A673 (cell line): ENCODE measurements at regions of chr2 and their contacts with region 1.

Region 1: DNA sequence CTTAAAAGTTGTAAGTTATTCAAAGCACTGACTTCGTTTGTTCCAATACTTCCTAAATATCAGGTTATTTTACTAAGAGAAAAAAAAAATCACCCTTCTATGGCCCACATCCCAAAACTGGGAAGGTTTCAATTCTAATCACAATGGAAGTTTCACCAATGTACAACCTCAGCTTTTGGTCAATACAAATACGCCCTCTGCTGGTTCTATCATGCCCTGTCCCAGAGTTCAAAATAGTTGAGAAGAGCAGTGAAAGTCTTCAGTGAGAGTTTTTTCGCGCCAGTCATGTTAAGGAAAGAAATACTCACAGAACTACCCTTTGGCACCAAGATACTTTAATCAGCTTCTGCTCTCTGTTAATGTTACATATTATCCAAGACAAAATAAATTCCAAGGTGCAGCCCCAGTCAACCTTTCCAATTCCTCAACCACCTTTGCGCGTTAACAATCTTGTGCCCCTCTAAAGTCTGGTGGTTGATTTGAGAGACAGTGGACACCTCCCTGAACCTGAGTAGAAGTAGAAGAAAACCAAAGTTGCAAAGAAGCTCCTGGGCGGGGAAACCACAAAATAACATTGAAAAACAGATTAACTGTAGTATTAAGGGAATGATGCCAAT is 59.9 kb downstream of the SUMO1 start:
- DNase-seq: peak; percentile 83
- H3K4me3 ChIP-seq: no peak overlapping the region
- H3K27ac ChIP-seq: no peak overlapping the region
- H3K4me1 ChIP-seq: no peaks in the 10 kb centered on the region
- H3K27me3 ChIP-seq: no peaks in the 10 kb centered on the region
- CTCF ChIP-seq: peak; percentile 89

Region 2: DNA sequence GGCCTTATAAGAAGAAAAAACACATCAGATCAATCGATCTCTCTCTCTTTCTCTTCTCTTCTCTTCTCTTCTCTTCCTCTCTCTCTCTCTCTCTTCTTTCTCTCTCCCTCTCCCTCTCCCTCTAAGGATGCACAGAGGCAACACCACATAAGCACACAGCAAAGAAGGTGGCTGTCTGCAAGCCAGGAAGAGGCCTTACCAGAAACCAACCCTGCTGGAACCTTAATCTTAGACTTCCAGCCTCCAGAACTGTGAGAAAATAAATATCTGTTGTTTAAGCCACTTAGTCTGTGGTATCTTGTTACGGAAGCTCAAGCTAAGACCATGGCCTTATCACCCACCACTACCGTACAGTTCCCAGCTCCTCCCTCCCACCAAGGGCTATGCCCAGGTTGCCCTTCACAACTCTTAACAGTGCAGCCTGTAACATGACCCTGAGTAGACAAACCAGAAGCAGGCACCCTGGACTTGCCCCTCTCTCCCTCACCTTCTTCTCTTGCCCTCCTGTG is 510.0 kb before region 1 on chr2:
- CTCF ChIA-PET with region 1: no interaction called
- POLR2A ChIA-PET with region 1: no interaction called
- intact Hi-C with region 1: loop called (anchors 5 kb)
- DNase-seq: no peak
- H3K4me3 ChIP-seq: no peak overlapping the region
- H3K27ac ChIP-seq: no peak overlapping the region
- H3K4me1 ChIP-seq: no peaks in the 10 kb centered on the region
- H3K27me3 ChIP-seq: no peaks in the 10 kb centered on the region
- CTCF ChIP-seq: no peak

Region 3: DNA sequence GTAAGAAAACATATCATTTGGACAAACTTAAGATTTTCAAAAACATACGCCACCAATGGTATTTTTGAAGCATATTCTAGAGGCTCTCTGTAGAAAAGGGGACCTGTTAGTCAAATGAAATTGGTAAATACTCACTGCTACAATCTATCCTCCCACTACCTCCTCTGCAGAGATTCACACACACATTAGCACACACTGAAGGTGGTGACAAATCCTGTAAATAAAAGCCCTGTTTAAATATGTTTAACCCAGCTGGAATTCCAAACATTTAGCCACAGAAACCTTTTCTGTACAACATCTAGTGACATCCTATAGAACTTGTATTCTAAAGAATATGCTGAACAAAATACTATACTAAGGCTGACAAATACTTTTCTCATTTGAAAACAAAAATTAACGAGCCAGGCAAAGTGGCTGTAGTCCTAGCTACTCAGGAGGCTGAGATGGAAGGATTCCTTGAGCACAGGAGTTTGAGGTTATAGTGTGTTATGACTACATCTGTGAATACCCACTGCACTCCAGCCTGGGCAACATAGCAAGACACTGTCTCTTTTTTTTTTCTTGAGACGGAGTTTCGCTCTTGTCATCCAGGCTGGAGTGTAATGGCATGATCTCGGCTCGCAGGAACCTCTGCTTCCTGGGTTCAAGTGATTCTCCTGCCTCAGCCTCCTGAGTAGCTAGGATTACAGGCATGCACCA is 423.6 kb before region 1 on chr2:
- CTCF ChIA-PET with region 1: no interaction called
- POLR2A ChIA-PET with region 1: no interaction called
- intact Hi-C with region 1: loop called (anchors 1 kb)
- DNase-seq: no peak
- H3K4me3 ChIP-seq: no peak overlapping the region
- H3K27ac ChIP-seq: no peak overlapping the region
- H3K4me1 ChIP-seq: no peaks in the 10 kb centered on the region
- H3K27me3 ChIP-seq: no peaks in the 10 kb centered on the region
- CTCF ChIP-seq: no peak

Region 4: GRCh38 chr2:201860636-201861066 is 317.8 kb before region 1 on chr2:
- CTCF ChIA-PET with region 1: interaction called, 7 read pairs
- POLR2A ChIA-PET with region 1: no interaction called
- intact Hi-C with region 1: loop called (anchors 1 kb)
- DNase-seq: peak; percentile 89
- H3K4me3 ChIP-seq: no peak overlapping the region
- H3K27ac ChIP-seq: no peak overlapping the region
- H3K4me1 ChIP-seq: peaks cover 35% of the 10 kb centered on the region
- H3K27me3 ChIP-seq: no peaks in the 10 kb centered on the region
- CTCF ChIP-seq: peak; percentile 85

Region 5: DNA sequence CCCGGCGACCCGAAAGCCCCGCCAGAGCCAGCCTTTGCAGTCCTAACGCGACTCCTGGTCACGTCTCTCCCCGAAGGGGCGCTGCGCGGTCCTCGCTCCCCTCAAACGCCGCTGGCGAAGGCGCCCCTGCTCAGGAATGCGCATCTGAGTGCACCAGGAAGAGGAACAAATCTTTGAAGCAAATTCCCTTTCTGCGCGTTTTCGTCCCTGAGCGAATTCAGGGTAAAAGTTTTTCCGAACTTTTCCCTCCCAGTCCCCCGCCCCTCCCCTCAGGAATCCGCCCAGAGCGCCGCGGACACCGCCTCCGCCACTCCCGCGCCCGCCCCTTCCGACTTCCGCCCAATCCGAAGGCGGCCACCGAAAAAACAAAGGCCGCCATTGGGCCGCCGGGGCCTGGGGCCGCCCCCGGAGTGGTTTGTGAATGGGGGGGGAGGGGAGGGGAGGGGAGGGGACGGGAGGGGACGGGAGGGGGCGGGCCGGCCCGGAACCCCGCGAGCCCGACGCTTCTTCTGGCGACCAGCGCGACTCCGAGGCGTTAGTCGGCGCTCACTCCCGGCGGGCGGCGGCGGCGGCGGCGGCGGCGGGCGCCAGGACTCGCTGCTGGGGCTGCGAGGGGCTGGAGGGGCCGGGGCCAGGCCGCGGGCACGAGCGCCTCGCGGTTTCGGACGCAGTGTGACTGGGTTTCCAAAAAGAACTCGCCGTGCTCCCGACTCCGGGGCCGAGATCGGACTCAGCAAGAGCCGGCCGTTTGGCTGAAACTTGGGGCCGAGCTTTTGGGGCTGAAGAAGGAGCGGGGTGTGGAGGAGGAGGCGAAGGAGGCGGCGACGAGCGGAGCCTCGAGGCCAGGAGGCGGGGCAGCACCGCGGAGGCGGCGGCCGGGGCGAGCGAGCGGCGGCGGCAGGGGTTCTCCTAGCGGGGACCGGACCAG is 144.9 kb before region 1 on chr2 and contains the start of gene FZD7:
- CTCF ChIA-PET with region 1: interaction called, 3 read pairs
- POLR2A ChIA-PET with region 1: no interaction called
- intact Hi-C with region 1: loop called (anchors 2 kb)
- DNase-seq: peak; percentile 97
- H3K4me3 ChIP-seq: peak within 1 kb of the TSS; percentile 85
- H3K27ac ChIP-seq: peak within 1 kb of the TSS; percentile 95
- H3K4me1 ChIP-seq: peaks cover 38% of the 10 kb centered on the region
- H3K27me3 ChIP-seq: no peaks in the 10 kb centered on the region
- CTCF ChIP-seq: peak; percentile 28
- total RNA-seq, gene FZD7: 14.1 and 15.1 TPM in 2 replicates

Region 6: GRCh38 chr2:202121532-202122162 is 56.8 kb before region 1 on chr2:
- CTCF ChIA-PET with region 1: no interaction called
- POLR2A ChIA-PET with region 1: no interaction called
- intact Hi-C with region 1: no loop called
- DNase-seq: no peak
- H3K4me3 ChIP-seq: no peak overlapping the region
- H3K27ac ChIP-seq: no peak overlapping the region
- H3K4me1 ChIP-seq: peaks cover 11% of the 10 kb centered on the region
- H3K27me3 ChIP-seq: no peaks in the 10 kb centered on the region
- CTCF ChIP-seq: no peak